PC-3 (cell line): ENCODE measurements at regions of chr1 and their contacts with region 1.

Region 1: GRCh38 chr1:91611498-91611917 is 110.9 kb downstream of the CDC7 start:
- DNase-seq: peak; percentile 72
- ATAC-seq: peak; percentile 61
- H3K4me3 ChIP-seq: no peak overlapping the region
- H3K27ac ChIP-seq: peak overlapping the region; percentile 80
- H3K4me1 ChIP-seq: peaks cover 55% of the 10 kb centered on the region
- H3K27me3 ChIP-seq: no peaks in the 10 kb centered on the region
- CTCF ChIP-seq: no peak

Region 2: DNA sequence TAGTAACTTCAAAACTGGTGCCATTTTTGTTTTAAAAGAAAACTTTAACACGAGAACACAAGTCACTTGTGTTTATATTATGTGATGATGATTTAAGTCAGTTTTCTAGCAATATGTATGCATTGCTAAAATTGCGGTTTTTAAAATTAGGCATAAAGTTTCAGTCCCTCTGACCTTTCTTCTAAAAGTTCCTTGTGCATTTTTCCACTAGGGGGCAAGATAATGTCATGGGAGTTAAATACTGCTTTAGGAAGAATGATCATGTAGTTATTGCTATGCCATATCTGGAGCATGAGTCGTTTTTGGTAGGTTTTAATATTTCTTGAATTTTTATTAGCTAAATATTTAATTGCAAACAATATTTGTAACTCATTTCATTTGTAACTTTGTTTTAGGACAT is 100.1 kb before region 1 on chr1:
- CTCF ChIA-PET with region 1: interaction called, 10 read pairs
- POLR2A ChIA-PET with region 1: no interaction called
- intact Hi-C with region 1: no loop called
- DNase-seq: peak; percentile 61
- ATAC-seq: 0 out of 2 replicates have a peak, but pooled peaks have one; percentile 46
- H3K4me3 ChIP-seq: no peak overlapping the region
- H3K27ac ChIP-seq: no peak overlapping the region
- H3K4me1 ChIP-seq: no peaks in the 10 kb centered on the region
- H3K27me3 ChIP-seq: no peaks in the 10 kb centered on the region
- CTCF ChIP-seq: peak; percentile 79

Region 3: GRCh38 chr1:91529856-91530255 is 81.7 kb before region 1 on chr1:
- CTCF ChIA-PET with region 1: no interaction called
- POLR2A ChIA-PET with region 1: no interaction called
- intact Hi-C with region 1: loop called (anchors 5 kb)
- DNase-seq: peak; percentile 58
- ATAC-seq: peak; percentile 73
- H3K4me3 ChIP-seq: no peak overlapping the region
- H3K27ac ChIP-seq: no peak overlapping the region
- H3K4me1 ChIP-seq: no peaks in the 10 kb centered on the region
- H3K27me3 ChIP-seq: no peaks in the 10 kb centered on the region
- CTCF ChIP-seq: peak; percentile 71

Region 4: GRCh38 chr1:91569411-91570119 is 41.9 kb before region 1 on chr1:
- CTCF ChIA-PET with region 1: no interaction called
- POLR2A ChIA-PET with region 1: interaction called, 5 read pairs
- intact Hi-C with region 1: loop called (anchors 5 kb)
- DNase-seq: peak; percentile 85
- ATAC-seq: peak; percentile 97
- H3K4me3 ChIP-seq: no peak overlapping the region
- H3K27ac ChIP-seq: peak overlapping the region; percentile 76
- H3K4me1 ChIP-seq: peaks cover 22% of the 10 kb centered on the region
- H3K27me3 ChIP-seq: no peaks in the 10 kb centered on the region
- CTCF ChIP-seq: no peak

Region 5: GRCh38 chr1:91684481-91685196 is 73.1 kb after region 1 on chr1:
- CTCF ChIA-PET with region 1: no interaction called
- POLR2A ChIA-PET with region 1: no interaction called
- intact Hi-C with region 1: loop called (anchors 5 kb)
- DNase-seq: no peak
- ATAC-seq: no peak
- H3K4me3 ChIP-seq: no peak overlapping the region
- H3K27ac ChIP-seq: no peak overlapping the region
- H3K4me1 ChIP-seq: peaks cover 11% of the 10 kb centered on the region
- H3K27me3 ChIP-seq: no peaks in the 10 kb centered on the region
- CTCF ChIP-seq: no peak

Region 6: GRCh38 chr1:91732291-91733107 is 121.0 kb after region 1 on chr1:
- CTCF ChIA-PET with region 1: no interaction called
- POLR2A ChIA-PET with region 1: interaction called, 5 read pairs
- intact Hi-C with region 1: loop called (anchors 2 kb)
- DNase-seq: peak; percentile 89
- ATAC-seq: peak; percentile 66
- H3K4me3 ChIP-seq: no peak overlapping the region; the same call in 1 of the 2 replicates
- H3K27ac ChIP-seq: peak overlapping the region; percentile 72
- H3K4me1 ChIP-seq: peaks cover 51% of the 10 kb centered on the region
- H3K27me3 ChIP-seq: no peaks in the 10 kb centered on the region
- CTCF ChIP-seq: no peak

Region 7: DNA sequence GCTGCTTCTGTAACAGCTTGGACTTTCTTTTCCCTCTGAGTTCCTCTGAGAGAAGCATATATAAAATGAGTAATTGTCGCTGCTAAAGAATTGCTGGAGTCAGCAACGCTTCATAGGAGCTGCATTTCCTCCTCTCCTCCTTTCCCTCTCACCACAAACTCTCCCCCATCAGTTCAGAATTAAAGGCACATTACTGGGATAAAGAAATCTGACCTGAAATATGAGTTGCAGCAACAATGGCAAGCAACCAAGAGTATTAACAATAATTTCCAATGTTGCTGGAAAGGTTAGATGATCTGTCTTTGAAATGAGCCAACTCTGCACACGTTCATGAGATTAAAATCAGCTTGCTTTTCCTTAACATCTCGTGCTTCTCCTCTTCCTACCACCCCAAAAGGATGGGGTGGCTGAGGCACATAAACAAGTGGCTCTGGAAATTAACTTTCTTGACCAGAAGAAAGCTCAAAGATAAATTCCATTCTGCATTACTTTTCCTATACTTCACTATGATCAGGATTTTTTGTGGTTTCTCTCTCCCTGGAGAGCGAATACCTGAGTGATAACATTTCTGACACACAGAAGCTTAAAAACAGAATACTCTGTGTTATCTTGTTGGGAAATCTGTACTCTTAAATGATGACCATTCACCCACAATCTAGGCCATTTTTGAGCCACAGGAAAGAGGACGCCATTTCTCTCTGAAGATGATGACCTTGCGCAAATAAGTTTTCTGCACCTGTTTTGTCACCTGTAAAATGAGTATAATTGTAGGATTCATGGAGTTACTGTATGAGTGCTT is 184.3 kb after region 1 on chr1:
- CTCF ChIA-PET with region 1: no interaction called
- POLR2A ChIA-PET with region 1: no interaction called
- intact Hi-C with region 1: loop called (anchors 5 kb)
- DNase-seq: peak; percentile 77
- ATAC-seq: peak; percentile 90
- H3K4me3 ChIP-seq: peak overlapping the region; percentile 16; the same call in 1 of the 2 replicates
- H3K27ac ChIP-seq: peak overlapping the region; percentile 27
- H3K4me1 ChIP-seq: peaks cover 28% of the 10 kb centered on the region
- H3K27me3 ChIP-seq: no peaks in the 10 kb centered on the region
- CTCF ChIP-seq: no peak